BJ (cell line): ENCODE measurements at regions of chr2 and their contacts with region 1.

Region 1: GRCh38 chr2:215441560-215442403 is 5.9 kb upstream of the FN1 start:
- DNase-seq: no peak
- H3K4me3 ChIP-seq: no peak overlapping the region
- H3K27me3 ChIP-seq: no peaks in the 10 kb centered on the region
- CTCF ChIP-seq: no peak

Region 2: GRCh38 chr2:215506604-215506990 is 64.8 kb after region 1 on chr2:
- CTCF ChIA-PET with region 1: no interaction called
- POLR2A ChIA-PET with region 1: interaction called, 12 read pairs
- DNase-seq: no peak
- H3K4me3 ChIP-seq: no peak overlapping the region
- H3K27me3 ChIP-seq: no peaks in the 10 kb centered on the region
- CTCF ChIP-seq: no peak